Transverse colon (tissue), 4 donors: ENCODE measurements at regions of chr7 and their contacts with region 1.

Region 1: GRCh38 chr7:34523226-34523918 is 134.6 kb upstream of the NPSR1 start:
- DNase-seq: no peak
- H3K4me3 ChIP-seq: no peak overlapping the region
- H3K27ac ChIP-seq: no peak overlapping the region
- H3K4me1 ChIP-seq: no peaks in the 10 kb centered on the region
- H3K27me3 ChIP-seq: no peaks in the 10 kb centered on the region
- CTCF ChIP-seq: no peak
- EP300 ChIP-seq: no peak
- POLR2A ChIP-seq: no peak

Region 2: DNA sequence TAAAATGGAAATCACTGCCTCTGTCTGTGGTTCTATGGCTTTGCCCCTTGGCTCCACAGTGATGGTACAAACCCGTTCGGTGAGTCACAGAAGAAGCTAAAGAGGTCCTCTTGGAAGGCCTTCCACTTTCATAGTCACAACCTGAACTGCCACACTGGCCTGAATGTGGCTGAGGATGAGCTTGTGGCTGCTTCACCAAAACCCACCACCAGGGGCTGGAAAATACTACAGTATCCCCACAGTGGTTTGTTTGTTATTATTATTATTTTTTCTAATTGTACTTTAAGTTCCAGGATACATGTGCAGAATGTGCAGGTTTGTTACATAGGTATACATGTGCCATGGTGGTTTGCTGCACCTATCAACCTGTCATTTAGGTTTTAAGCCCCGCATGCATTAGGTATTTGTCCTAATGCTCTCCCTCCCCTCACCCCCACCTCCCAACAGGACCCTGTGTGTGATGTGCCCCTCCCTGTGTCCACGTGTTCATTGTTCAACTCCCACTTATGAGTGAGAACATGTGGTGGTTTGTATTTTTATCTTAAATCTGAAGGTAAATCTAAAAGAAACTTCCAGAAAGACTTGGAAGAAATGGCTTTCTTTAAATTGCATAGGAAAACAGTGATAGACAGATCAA is 26.1 kb before region 1 on chr7:
- in situ Hi-C with region 1: no loop called
- intact Hi-C with region 1: loop called (anchors 1 kb)
- DNase-seq: no peak
- H3K4me3 ChIP-seq: no peak overlapping the region
- H3K27ac ChIP-seq: no peak overlapping the region
- H3K4me1 ChIP-seq: no peaks in the 10 kb centered on the region
- H3K27me3 ChIP-seq: no peaks in the 10 kb centered on the region
- CTCF ChIP-seq: no peak
- EP300 ChIP-seq: no peak
- POLR2A ChIP-seq: no peak